Left ventricle myocardium superior (tissue), 1 donor: ENCODE measurements at regions of chr7 and their contacts with region 1.

Region 1: DNA sequence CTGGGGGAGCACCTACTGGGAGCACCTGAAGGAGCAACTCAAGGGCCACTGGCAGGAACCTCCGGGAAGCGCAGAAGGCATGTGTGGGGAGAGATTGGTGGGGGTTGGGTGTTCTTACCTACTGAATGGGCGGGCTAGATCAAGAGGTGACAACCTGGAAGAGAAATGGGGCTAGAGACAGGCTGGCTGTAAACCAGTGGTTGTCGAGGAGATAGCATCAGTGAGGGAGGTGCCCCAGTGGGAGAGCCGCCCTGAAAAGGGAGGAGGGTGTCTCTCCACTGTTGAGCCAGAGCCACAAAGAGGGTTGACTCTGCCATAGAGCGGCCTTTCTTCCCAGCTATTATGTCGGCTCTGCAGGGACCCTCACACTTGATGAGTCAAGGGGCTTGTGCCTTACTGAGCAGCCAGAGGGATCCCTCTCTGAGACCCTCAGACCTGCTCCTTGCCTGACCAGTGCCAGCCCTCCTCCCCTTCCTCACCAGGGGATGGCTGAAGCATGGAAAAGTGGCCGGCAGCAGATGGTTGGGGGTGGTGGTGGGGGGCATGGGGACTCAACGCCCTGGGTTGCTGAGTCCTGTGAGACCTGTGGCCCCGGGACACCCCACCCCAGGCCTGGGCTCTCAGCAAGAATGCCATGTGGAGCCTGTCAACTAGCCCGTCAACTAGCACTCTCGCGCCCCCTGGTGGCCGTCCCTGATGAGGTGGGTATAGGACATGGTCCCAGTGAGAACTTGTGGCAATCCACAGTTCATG is 36.5 kb upstream of the PURB start:
- DNase-seq: peak; percentile 96
- ATAC-seq: peak; percentile 96

Region 2: DNA sequence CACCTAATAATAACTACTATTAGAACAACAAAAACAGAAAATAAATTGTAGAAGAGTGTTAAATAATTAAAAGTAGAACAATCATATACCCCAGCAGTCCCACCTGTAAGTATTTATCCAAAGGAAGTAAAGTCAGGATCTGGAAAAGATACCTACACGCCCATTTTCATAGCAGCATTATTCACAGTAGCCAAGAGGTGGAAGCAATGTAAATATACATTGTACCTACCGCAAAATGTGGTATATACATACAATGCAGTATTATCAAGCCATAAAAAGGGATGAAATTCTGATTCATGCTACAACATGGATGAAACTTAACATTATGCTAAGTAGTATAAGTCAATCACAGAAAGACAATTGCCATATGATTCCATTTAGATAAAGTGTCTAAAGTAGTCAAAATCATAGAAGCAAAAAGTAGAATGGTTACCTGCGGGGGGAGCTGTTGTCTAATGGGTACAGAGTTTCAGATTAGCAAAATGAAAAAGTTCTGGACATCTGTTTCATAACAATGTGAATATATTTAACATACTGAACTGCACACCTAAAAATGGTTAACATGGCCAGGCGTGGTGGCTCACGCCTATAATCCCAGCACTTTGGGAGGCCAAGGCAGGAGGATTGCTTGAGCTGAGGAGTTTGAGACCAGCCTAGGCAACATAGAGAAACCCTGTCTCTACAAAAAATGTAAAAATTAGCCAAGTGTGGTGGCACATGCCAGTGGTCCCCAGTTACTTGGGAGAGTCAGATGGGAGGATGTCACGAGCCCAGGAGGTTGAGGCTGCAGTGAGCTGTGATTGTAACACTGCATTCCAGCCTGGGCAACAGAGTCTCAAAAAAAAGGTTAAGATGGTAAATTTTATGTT is 333.7 kb before region 1 on chr7:
- intact Hi-C with region 1: loop called (anchors 5 kb)
- DNase-seq: no peak
- ATAC-seq: peak; percentile 73

Region 3: GRCh38 chr7:44678471-44679179 is 243.2 kb before region 1 on chr7:
- intact Hi-C with region 1: no loop called
- DNase-seq: peak; percentile 70
- ATAC-seq: peak; percentile 76

Region 4: DNA sequence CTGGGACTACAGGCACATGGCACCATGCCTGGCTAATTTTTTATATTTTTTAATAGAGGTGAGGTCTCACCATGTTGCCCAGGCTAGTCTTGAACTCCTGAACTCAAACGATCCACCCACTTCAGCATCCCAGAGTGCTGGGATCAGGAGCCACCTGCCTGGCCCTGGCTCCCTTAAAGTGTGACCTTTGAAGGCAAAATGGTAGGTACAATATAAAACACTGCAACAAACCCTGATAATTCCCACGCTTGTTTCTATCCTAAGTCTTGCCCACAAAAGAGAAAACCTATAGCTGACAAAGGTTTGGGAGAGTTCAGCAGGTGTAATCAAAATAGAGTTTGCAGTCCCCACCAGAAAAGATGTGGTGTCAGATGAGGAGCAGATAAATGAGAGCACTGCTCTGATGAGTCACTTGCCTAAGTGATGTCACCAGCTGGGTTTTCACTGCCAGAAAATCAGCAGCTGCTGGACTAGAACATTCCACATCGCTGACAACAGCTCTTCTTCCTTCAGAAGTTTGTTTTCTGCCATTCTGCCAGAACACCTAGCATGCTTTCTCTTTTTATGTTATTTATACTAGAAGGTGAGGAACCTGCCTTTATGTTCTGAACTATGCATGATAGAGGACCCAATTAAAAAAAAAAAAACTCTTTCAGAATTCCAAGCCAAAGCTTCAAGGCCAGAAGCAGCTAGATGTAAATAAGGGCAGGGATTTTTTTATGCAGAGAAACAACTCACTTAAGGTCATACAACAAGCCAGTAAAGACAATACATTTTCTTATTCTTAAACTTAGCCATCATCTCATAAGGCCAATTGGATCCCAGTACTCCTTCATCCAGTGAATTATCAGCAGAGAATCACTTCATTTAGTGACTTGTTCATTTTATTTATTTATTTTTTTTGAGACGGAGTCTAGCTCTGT is 54.4 kb before region 1 on chr7:
- intact Hi-C with region 1: loop called (anchors 10 kb)
- DNase-seq: no peak
- ATAC-seq: peak; percentile 68